Testis (tissue), 5 donors: ENCODE measurements at regions of chr5 and their contacts with region 1.

Region 1: DNA sequence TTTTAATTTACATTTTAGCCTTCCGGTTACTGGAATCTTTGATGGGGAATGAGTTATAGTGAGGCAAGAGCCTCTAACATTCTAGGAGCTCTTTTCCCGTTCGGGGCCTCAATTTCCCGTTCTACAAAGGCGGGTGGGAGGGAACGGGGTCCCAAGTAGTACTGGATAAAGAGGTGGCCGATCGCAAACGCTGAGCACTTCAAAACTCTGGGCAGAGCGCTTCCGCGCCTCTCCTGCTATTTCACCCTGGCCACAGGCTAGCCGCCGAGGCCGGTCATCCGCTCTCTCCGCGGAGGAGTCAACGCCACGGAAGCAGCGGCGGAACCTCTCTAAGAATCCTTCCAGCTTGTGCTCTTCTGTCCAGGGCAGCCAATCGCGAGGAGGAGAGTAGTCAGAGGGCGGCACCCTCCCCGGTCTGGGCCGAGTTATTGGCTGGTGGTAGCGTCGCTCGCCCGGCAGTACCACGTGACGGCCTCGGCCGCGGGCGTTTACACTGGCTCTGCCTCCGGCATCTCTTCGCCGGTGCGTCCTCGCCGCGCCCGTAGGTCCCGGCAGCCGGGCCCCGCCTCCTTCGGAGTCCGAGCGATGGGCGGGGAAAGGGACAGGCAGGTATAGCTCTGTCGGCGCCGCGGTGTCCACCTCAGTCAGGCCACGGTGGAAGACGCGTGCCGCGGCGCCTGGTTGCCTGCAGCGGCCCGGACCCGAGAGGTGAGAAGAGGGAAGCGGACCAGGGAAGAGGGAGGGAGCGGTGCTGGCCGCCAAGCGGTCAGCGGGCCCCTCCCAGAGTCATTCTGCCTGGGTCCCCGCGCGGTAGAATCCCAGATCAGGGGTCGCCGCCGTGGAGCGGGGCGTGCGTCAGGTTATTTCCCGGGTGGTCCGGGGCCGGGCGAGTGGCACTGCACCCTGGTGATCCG is at the start of gene SLC26A2:
- DNase-seq: peak; percentile 99
- H3K4me3 ChIP-seq: peak within 1 kb of the TSS; percentile 87 to 88
- H3K27ac ChIP-seq: peak within 1 kb of the TSS; percentile 89 to 90
- H3K4me1 ChIP-seq: peaks cover 14% of the 10 kb centered on the region
- H3K27me3 ChIP-seq: no peaks in the 10 kb centered on the region
- CTCF ChIP-seq: peak in 1 of 3 experiments; percentile 7
- POLR2A ChIP-seq: peak; percentile 67
- total RNA-seq, gene SLC26A2: 13.5 to 16.3 TPM

Region 2: GRCh38 chr5:149839761-149840160 is 120.8 kb before region 1 on chr5:
- intact Hi-C with region 1: loop called (anchors 10 kb)
- DNase-seq: no peak
- H3K4me3 ChIP-seq: no peak overlapping the region
- H3K27ac ChIP-seq: no peak overlapping the region
- H3K4me1 ChIP-seq: no peaks in the 10 kb centered on the region
- H3K27me3 ChIP-seq: no peaks in the 10 kb centered on the region
- CTCF ChIP-seq: no peak
- POLR2A ChIP-seq: no peak